CD4-positive, alpha-beta T cell (primary cell): ENCODE measurements at regions of chrX and their contacts with region 1.

Region 1: DNA sequence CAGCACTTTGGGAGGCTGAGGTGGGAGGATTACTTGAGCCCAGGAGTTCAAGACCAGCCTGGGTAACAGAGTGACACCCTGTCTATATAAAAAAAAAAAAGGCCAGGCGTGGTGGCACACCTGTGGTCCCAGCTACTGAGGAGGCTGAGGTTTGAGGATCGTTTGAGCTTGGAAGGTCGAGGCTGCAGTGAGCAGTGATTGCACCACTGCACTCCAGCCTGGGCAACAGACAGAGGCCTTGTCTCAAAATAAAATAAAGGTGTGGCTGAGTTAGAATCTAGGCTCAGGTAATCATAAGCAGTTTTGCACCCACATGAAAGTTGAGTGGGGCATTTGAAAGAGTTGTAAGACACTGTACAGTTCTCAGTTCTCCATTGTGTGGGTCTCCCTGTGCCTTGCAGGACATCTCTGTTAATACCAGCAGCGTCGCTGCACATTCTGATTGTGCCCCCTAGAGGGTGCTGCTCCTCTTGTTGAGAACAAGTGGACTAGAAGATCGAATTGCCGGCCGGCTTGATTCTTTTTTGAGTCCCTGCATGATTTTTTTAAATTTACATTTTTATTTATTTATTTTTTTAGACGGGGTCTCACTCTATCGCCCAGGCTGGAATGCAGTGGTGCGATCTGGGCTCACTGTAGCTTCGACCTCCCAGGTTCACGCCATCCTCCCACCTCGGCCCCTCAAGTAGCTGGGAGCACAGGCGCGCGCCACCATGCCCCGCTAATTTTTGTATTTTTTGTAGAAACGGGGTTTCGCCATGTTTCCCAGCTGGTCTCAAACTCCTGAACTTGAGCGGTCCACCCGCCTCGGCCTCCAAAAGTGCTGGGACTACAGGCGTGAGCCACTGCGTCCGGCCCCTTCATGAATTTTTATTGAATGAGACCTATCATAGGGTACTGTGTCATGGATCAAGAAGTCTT is 73.6 kb upstream of the RBMX start:
- DNase-seq: peak; percentile 20 to 71 (median 34)
- ATAC-seq: peak; percentile 60
- H3K4me3 ChIP-seq: no peak overlapping the region
- H3K4me3 Mint-ChIP-seq: no peak overlapping the region
- H3K27ac ChIP-seq: no peak overlapping the region
- H3K27ac Mint-ChIP-seq: no peak overlapping the region
- H3K4me1 ChIP-seq: peaks cover 3% of the 10 kb centered on the region
- H3K4me1 Mint-ChIP-seq: no peaks in the 10 kb centered on the region
- H3K27me3 ChIP-seq: no peaks in the 10 kb centered on the region
- H3K27me3 Mint-ChIP-seq: no peaks in the 10 kb centered on the region
- CTCF ChIP-seq: peak; percentile 34

Region 2: DNA sequence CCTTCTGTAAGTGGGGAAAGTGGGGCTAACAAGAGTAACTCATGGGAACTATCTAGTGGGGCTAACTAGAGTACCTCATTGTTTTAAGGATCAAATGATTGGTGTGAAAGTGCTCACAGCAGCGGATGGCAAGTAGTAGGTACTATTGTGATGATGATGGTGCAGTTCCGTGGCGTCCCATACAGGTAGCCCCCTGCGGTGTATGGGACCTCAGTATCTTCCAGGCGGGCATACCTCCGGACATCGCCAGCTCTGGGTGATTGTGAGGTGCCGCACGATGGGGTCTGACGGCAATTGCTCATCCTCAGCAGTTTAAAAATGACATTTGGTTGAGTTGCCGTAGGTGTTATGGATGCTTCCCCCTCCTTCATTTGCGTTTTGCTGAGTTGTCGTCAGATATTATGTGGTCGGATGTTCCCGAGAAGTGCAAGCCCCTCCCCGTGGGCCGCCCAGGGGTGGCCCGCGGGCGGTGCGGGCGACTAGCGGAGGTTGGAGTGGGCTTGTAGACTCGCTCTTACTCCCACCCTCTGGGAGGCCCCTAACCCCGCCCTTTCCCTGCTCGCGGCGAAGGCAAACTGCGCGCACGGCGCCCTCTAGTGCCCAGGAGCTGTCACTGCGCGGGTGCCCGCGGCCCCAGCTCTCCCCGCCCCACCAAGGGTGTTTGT is 98.0 kb after region 1 on chrX:
- CTCF ChIA-PET with region 1: interaction called, 3 read pairs
- POLR2A ChIA-PET with region 1: no interaction called
- intact Hi-C with region 1: loop called (anchors 1 to 2 kb)
- DNase-seq: peak; percentile 64 to 87 (median 72)
- ATAC-seq: peak; percentile 89
- H3K4me3 ChIP-seq: peak overlapping the region; percentile 48
- H3K4me3 Mint-ChIP-seq: peak overlapping the region; percentile 96
- H3K27ac ChIP-seq: no peak overlapping the region
- H3K27ac Mint-ChIP-seq: no peak overlapping the region
- H3K4me1 ChIP-seq: peaks cover 15% of the 10 kb centered on the region
- H3K4me1 Mint-ChIP-seq: peaks cover 11% of the 10 kb centered on the region
- H3K27me3 ChIP-seq: peaks cover 4 to 30% of the 10 kb centered on the region in 2 experiments
- H3K27me3 Mint-ChIP-seq: peaks cover 47% of the 10 kb centered on the region
- CTCF ChIP-seq: peak; percentile 78

Region 3: DNA sequence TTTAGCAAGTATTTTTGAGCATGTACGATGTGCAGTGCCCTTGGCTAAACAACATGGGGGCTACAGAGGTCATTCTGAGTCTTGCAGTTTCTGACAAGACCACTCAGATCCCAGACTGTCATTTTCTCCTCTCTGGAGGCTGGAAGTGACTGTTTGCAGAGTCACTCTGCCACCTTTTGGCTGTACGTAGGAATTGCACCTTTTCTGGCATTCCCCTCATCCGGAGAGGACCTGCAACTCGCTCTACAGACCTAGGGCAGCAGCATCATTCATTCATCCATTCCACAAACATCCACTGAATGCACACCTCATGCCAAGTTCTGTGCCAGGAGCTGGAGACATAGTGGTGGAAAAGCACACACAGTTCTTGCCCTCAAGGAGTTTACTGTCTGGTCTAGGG is 240.0 kb after region 1 on chrX:
- CTCF ChIA-PET with region 1: no interaction called
- POLR2A ChIA-PET with region 1: no interaction called
- intact Hi-C with region 1: loop called in 1 of 2 experiments (anchors 1 kb)
- DNase-seq: peak in 6 of 14 experiments; percentile 0 to 39 (median 26)
- ATAC-seq: peak; percentile 46
- H3K4me3 ChIP-seq: no peak overlapping the region
- H3K4me3 Mint-ChIP-seq: no peak overlapping the region
- H3K27ac ChIP-seq: no peak overlapping the region
- H3K27ac Mint-ChIP-seq: no peak overlapping the region
- H3K4me1 ChIP-seq: no peaks in the 10 kb centered on the region
- H3K4me1 Mint-ChIP-seq: peaks cover 11% of the 10 kb centered on the region
- H3K27me3 ChIP-seq: no peaks in the 10 kb centered on the region
- H3K27me3 Mint-ChIP-seq: no peaks in the 10 kb centered on the region
- CTCF ChIP-seq: peak; percentile 54